Activated CD8-positive, alpha-beta T cell treated with anti-CD3 and anti-CD28 coated beads, Interleukin-2, amount 10 ng/mL, durations not matched to agents 7 days and 5 days (primary cell): ENCODE measurements at regions of chr5 and their contacts with region 1.

Region 1: GRCh38 chr5:176415952-176416924 is at the start of gene CLTB:
- DNase-seq: peak; percentile 89
- ATAC-seq: peak; percentile 97
- H3K4me3 Mint-ChIP-seq: peak within 1 kb of the TSS; percentile 77
- H3K27ac Mint-ChIP-seq: peak within 1 kb of the TSS; percentile 76
- H3K4me1 Mint-ChIP-seq: peaks cover 29% of the 10 kb centered on the region
- H3K27me3 Mint-ChIP-seq: peaks cover 12% of the 10 kb centered on the region
- total RNA-seq, gene CLTB: 65.4 to 67.7 TPM

Region 2: DNA sequence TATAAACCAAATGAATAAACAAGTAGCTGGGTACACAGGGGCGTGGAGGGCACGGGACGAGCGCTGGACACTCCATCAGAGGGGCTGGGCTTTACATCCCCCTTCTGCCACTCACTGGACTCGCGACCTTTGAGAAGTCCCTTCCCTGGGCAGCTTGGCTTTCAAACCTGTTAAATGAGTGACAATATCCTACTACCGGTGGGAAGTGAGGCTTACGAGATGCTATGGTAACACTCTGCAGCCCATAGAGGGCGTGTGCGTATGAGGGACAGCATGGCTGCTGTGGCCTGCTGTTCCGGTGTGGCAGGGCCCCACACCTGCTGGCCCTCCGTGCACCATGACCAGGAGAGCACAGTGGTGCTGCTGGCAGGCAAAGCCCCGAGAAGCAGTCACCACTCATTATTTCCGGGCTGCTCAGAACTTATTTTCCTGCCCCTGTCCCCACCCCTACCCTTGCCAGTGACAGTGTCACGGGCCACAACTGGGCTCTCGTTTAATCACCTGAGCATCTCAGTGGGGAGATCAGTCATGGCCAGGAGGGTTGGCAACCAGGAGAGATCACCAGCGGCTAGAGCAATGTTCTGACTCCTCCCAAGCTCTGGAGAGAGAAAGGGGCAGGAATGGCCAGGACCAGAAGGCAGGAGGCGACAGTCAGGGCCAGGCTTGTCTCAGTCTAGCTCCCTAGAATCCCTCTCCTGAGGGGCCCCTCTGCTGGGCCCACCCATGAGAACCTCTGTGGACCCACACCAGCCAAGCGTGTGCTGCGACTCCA is 10.4 kb before region 1 on chr5:
- CTCF ChIA-PET with region 1: interaction called, 19 read pairs
- POLR2A ChIA-PET with region 1: interaction called, 5 read pairs
- DNase-seq: no peak
- ATAC-seq: no peak
- H3K4me3 Mint-ChIP-seq: no peak overlapping the region
- H3K27ac Mint-ChIP-seq: no peak overlapping the region
- H3K4me1 Mint-ChIP-seq: no peaks in the 10 kb centered on the region
- H3K27me3 Mint-ChIP-seq: no peaks in the 10 kb centered on the region

Region 3: DNA sequence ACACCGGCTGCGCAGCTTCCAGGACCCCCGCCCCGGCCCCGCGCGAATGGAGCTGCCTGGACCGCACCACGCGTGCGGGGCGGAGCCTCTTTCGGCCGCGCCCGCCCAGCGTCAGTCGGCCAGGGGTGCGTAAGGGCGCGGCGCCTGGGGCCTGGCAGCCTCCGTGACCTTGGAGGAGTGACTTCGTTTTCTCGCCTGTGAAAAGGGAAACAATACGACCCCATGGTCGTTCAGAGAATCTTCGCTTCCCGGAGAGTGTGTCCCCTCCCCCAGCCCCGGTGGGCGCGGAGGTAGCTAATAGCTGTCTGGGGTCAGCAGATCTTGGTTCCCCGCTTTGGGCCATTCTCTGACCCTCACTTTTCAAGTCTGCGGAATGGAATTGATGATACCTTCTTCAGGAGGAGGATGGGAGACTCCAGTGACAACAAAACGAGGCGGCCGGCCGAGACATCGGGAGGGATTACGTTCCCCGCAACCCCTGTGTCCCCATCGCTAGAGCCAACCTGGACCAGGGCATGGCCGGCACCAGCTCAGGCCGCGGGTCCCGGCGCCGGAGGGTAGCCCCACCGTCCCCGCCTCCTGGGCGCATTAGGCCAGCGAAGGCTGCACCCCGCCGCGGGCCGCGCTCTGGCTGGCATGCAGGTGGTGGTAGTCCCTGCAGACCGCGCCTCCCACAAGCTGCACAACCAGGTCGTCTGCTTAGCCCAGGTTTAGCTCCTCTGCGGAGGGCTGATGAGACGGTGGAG is 127.4 kb after region 1 on chr5:
- CTCF ChIA-PET with region 1: interaction called, 15 read pairs
- POLR2A ChIA-PET with region 1: interaction called, 14 read pairs
- DNase-seq: peak; percentile 82
- ATAC-seq: peak; percentile 77
- H3K4me3 Mint-ChIP-seq: peak overlapping the region; percentile 94
- H3K27ac Mint-ChIP-seq: peak overlapping the region; percentile 92
- H3K4me1 Mint-ChIP-seq: peaks cover 67% of the 10 kb centered on the region
- H3K27me3 Mint-ChIP-seq: no peaks in the 10 kb centered on the region

Region 4: GRCh38 chr5:176573564-176574296 is 157.5 kb after region 1 on chr5:
- CTCF ChIA-PET with region 1: interaction called, 19 read pairs
- POLR2A ChIA-PET with region 1: no interaction called
- DNase-seq: peak; percentile 83
- ATAC-seq: peak; percentile 90
- H3K4me3 Mint-ChIP-seq: no peak overlapping the region
- H3K27ac Mint-ChIP-seq: no peak overlapping the region
- H3K4me1 Mint-ChIP-seq: peaks cover 3% of the 10 kb centered on the region
- H3K27me3 Mint-ChIP-seq: peaks cover 3% of the 10 kb centered on the region

Region 5: GRCh38 chr5:176596689-176597416 is 180.6 kb after region 1 on chr5:
- CTCF ChIA-PET with region 1: interaction called, 22 read pairs
- POLR2A ChIA-PET with region 1: no interaction called
- DNase-seq: peak; percentile 69
- ATAC-seq: peak; percentile 90
- H3K4me3 Mint-ChIP-seq: peak overlapping the region; percentile 66
- H3K27ac Mint-ChIP-seq: no peak overlapping the region
- H3K4me1 Mint-ChIP-seq: peaks cover 8% of the 10 kb centered on the region
- H3K27me3 Mint-ChIP-seq: peaks cover 2% of the 10 kb centered on the region